Activated naive CD4-positive, alpha-beta T cell treated with anti-CD3 and anti-CD28 coated beads for 36 hours (primary cell): ENCODE measurements at regions of chr12 and their contacts with region 1.

Region 1: GRCh38 chr12:111405149-111405860 is 418 bp upstream of the SH2B3 start:
- DNase-seq: peak; percentile 99
- H3K4me3 Mint-ChIP-seq: peak overlapping the region; percentile 77
- H3K27ac Mint-ChIP-seq: peak overlapping the region; percentile 96
- H3K4me1 Mint-ChIP-seq: peaks cover 57% of the 10 kb centered on the region
- H3K27me3 Mint-ChIP-seq: no peaks in the 10 kb centered on the region

Region 2: GRCh38 chr12:111434680-111435338 is 29.5 kb after region 1 on chr12:
- CTCF ChIA-PET with region 1: interaction called, 763 read pairs
- intact Hi-C with region 1: loop called (anchors 1 kb)
- DNase-seq: peak; percentile 89
- H3K4me3 Mint-ChIP-seq: peak overlapping the region; percentile 56
- H3K27ac Mint-ChIP-seq: peak overlapping the region; percentile 92
- H3K4me1 Mint-ChIP-seq: peaks cover 91% of the 10 kb centered on the region
- H3K27me3 Mint-ChIP-seq: no peaks in the 10 kb centered on the region

Region 3: DNA sequence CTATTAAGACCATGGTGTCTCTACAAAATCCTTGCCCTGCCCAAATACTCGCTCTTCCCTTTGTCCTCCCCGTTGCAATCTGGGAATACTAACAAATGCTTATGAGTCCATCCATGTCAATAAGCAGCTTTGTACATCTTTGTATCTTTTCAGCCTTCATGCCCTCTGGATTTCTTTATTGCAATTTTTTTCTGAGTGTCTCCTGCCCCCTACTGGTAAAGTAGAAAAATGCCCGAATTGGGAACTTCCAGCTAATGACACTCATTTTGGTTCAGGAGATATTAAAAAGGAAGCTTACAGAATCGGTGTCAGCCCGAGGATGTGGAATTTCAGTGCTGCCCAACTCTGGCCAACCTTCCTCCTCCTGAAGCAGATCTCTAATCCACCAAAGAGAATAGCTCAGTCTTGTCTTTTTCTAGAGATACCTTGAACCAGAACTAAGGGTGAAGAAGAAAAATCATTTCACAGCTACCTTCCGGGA is 46.4 kb after region 1 on chr12:
- CTCF ChIA-PET with region 1: interaction called, 763 read pairs
- intact Hi-C with region 1: loop called (anchors 1 kb)
- DNase-seq: no peak
- H3K4me3 Mint-ChIP-seq: no peak overlapping the region
- H3K27ac Mint-ChIP-seq: peak overlapping the region; percentile 19
- H3K4me1 Mint-ChIP-seq: peaks cover 23% of the 10 kb centered on the region
- H3K27me3 Mint-ChIP-seq: no peaks in the 10 kb centered on the region

Region 4: GRCh38 chr12:111599459-111600204 is 194.3 kb after region 1 on chr12:
- CTCF ChIA-PET with region 1: no interaction called
- intact Hi-C with region 1: loop called (anchors 2 kb)
- DNase-seq: peak; percentile 83
- H3K4me3 Mint-ChIP-seq: peak overlapping the region; percentile 83
- H3K27ac Mint-ChIP-seq: peak overlapping the region; percentile 85
- H3K4me1 Mint-ChIP-seq: peaks cover 25% of the 10 kb centered on the region
- H3K27me3 Mint-ChIP-seq: no peaks in the 10 kb centered on the region

Region 5: DNA sequence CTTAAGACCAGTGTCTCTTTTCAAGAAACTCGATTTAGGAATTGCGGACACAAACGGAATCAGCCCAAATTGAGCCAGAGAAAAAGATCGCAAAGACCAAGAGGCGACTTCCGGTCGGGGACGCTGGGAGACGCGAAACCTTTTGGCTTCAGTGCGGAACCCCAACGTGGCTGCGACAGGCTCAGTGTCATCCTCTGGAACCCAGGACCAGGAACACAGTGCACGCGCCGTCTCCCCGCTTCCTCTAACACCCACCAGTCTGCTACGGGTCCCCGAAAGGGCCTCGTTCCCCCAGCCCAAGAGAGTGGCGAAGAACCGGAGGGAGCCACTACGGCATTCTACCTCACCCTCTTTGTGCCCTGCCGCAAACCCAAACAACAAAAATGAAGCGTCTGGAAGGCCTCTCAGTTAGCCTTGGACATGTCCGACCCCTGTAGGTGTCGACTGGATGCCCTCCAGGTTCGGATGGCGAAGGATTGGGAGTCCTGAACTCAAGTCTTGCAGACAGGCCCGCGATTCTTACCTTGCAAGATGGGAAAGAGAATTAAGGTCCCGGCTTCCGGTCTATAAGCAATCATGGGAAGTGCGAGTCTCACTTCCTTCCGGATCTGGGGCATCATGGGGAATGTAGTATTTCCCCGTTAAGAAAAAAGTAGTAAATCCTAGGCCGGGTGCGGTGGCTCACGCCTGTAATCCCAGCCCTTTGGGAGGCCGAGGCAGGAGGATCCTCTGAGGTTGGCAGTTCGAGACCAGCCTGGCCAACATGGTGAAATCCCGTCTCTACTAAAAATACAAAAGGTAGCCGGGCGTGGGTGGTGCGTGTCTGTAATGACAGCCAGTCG is 1004.0 kb after region 1 on chr12 and contains the start of gene RPL6:
- CTCF ChIA-PET with region 1: no interaction called
- intact Hi-C with region 1: loop called (anchors 10 kb)
- DNase-seq: peak; percentile 88
- H3K4me3 Mint-ChIP-seq: peak within 1 kb of the TSS; percentile 100
- H3K27ac Mint-ChIP-seq: peak within 1 kb of the TSS; percentile 100
- H3K4me1 Mint-ChIP-seq: peaks cover 43% of the 10 kb centered on the region
- H3K27me3 Mint-ChIP-seq: no peaks in the 10 kb centered on the region
- total RNA-seq, gene RPL6: 2,358 to 2,432 TPM